ENCODE measurements at regions of chr22 and their contacts with region 1.

Region 1: GRCh38 chr22:42437488-42438292 is 5.5 kb upstream of the NFAM1 start:
- DNase-seq: peak; percentile 68 to 95 (median 86)
- ATAC-seq: peak; percentile 98
- H3K4me3 ChIP-seq: peak overlapping the region; percentile 40 to 52
- H3K4me3 Mint-ChIP-seq: peak overlapping the region; percentile 74
- H3K27ac ChIP-seq: no peak overlapping the region
- H3K27ac Mint-ChIP-seq: no peak overlapping the region
- H3K4me1 ChIP-seq: peaks cover 6% of the 10 kb centered on the region
- H3K4me1 Mint-ChIP-seq: peaks cover 7% of the 10 kb centered on the region
- H3K27me3 ChIP-seq: no peaks in the 10 kb centered on the region
- H3K27me3 Mint-ChIP-seq: no peaks in the 10 kb centered on the region
- CTCF ChIP-seq: peak; percentile 96

Region 2: GRCh38 chr22:41957941-41958556 is 479.6 kb before region 1 on chr22:
- CTCF ChIA-PET with region 1: no interaction called
- POLR2A ChIA-PET with region 1: no interaction called
- intact Hi-C with region 1: loop called (anchors 1 to 2 kb)
- DNase-seq: peak in 1 of 9 experiments; percentile 32
- ATAC-seq: peak; percentile 35
- H3K4me3 ChIP-seq: no peak overlapping the region
- H3K4me3 Mint-ChIP-seq: peak overlapping the region; percentile 11
- H3K27ac ChIP-seq: no peak overlapping the region
- H3K27ac Mint-ChIP-seq: no peak overlapping the region
- H3K4me1 ChIP-seq: no peaks in the 10 kb centered on the region
- H3K4me1 Mint-ChIP-seq: peaks cover 3% of the 10 kb centered on the region
- H3K27me3 ChIP-seq: peaks cover 0 to 6% of the 10 kb centered on the region in 2 experiments
- H3K27me3 Mint-ChIP-seq: no peaks in the 10 kb centered on the region
- CTCF ChIP-seq: peak; percentile 53

Region 3: DNA sequence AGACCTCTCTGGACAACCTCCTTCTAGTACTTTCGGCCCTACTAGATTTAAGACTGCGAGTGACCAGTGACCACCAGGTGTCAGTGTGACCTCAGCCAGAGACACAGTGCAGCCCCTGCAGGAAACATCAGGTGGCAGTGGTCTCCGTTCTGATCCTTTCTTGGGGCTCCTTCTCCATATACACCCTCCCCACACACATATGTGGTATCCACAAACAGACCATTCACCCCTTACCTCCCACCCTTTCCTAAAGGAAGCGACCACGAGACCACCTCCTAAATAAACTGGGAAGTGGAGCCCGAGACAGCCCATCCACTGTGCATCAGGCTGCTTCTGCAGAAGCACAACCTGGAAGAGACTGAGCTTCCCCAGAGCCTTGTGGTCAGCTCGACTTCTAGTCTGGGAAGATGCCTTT is 268.6 kb before region 1 on chr22:
- CTCF ChIA-PET with region 1: interaction called, 63 read pairs
- POLR2A ChIA-PET with region 1: no interaction called
- intact Hi-C with region 1: loop called in 1 of 2 experiments (anchors 1 kb)
- DNase-seq: peak; percentile 51 to 82 (median 74)
- ATAC-seq: peak; percentile 95
- H3K4me3 ChIP-seq: no peak overlapping the region
- H3K4me3 Mint-ChIP-seq: no peak overlapping the region
- H3K27ac ChIP-seq: no peak overlapping the region
- H3K27ac Mint-ChIP-seq: no peak overlapping the region
- H3K4me1 ChIP-seq: peaks cover 3% of the 10 kb centered on the region
- H3K4me1 Mint-ChIP-seq: peaks cover 36% of the 10 kb centered on the region
- H3K27me3 ChIP-seq: no peaks in the 10 kb centered on the region
- H3K27me3 Mint-ChIP-seq: no peaks in the 10 kb centered on the region
- CTCF ChIP-seq: peak; percentile 94

Region 4: DNA sequence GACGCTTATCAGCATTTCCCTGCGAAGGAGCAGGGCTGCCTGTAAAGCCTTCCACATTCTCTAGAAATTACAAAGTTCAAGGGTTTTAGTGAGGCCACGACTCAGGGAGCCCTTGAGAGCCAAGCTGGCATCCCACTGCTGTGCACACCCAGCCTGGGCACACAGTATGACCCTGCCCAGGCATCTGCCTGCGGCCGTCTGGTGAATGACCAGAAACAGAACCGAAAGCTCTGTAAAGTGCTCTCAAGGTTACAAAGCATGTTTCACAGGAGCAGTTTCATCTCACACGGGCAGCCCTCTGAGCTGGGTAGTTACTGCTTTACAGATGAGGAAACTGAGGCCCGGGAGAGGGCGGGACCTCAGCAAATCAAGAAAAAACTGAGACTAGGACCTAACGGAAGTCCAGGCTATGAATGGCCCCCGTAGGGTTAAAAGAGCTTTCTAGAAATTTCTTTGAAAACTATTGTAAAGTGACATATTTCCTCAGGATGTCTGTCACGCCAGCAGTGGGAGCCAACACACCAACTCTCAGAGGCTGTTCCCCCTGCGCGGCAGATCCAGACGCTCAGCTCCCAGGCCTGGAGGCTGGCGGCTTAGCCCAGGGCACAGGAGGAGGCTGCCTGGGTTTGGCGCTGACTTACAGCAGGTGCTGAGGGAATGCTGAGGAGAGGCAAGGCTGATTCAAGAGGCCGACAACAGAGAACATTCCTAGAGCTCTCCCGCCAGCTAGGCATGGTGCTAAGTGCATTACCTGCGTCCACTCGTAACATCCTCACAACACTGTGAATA is 159.5 kb before region 1 on chr22:
- CTCF ChIA-PET with region 1: interaction called, 10 read pairs
- POLR2A ChIA-PET with region 1: no interaction called
- intact Hi-C with region 1: no loop called
- DNase-seq: no peak
- ATAC-seq: no peak
- H3K4me3 ChIP-seq: no peak overlapping the region
- H3K4me3 Mint-ChIP-seq: no peak overlapping the region
- H3K27ac ChIP-seq: no peak overlapping the region
- H3K27ac Mint-ChIP-seq: no peak overlapping the region
- H3K4me1 ChIP-seq: no peaks in the 10 kb centered on the region
- H3K4me1 Mint-ChIP-seq: peaks cover 4% of the 10 kb centered on the region
- H3K27me3 ChIP-seq: peaks cover 4 to 9% of the 10 kb centered on the region in 2 experiments
- H3K27me3 Mint-ChIP-seq: peaks cover 3% of the 10 kb centered on the region
- CTCF ChIP-seq: no peak

Region 5: DNA sequence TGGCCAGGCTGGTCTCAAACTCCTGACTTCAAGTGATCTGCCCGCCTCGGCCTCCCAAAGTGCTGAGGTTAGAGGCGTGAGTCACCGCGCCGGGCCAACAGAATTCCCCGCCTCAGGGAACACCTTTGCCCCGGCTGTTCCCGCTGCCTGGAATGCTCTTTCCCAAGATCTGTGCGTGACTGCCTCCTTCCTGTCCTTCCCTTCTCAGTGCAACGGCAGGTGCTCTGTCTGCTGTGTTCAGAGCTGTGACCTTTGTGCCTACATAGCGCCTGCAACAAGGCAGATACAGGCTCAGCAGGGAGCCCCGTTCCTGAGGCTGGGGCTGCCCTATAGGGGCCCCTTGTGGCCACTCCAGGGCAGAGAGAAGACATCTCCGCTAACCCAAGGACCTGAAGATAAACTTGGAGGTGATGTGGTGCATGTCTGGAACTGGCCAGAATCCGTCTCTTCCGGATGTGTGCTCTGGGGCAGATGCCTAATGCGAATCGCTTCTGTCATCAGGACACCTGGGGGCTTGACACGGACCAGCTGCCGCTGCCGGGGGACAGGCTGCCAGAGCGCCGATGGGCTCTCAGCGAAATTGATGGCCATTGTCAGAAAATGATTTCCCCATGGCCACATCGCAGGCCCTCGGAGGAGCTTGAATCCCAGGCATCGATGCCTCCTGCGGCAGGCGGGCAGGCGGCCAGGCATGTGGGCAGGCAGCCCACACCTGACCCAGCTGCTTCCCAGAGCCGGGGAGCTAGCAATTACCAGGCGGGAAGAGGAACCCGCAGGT is 123.7 kb before region 1 on chr22:
- CTCF ChIA-PET with region 1: no interaction called
- POLR2A ChIA-PET with region 1: no interaction called
- intact Hi-C with region 1: loop called (anchors 1 kb)
- DNase-seq: peak in 6 of 9 experiments; percentile 33 to 71 (median 44)
- ATAC-seq: peak; percentile 50
- H3K4me3 ChIP-seq: no peak overlapping the region
- H3K4me3 Mint-ChIP-seq: no peak overlapping the region
- H3K27ac ChIP-seq: peak overlapping the region in 1 of 2 experiments; percentile 50
- H3K27ac Mint-ChIP-seq: no peak overlapping the region
- H3K4me1 ChIP-seq: peaks cover 85% of the 10 kb centered on the region
- H3K4me1 Mint-ChIP-seq: peaks cover 45% of the 10 kb centered on the region
- H3K27me3 ChIP-seq: no peaks in the 10 kb centered on the region
- H3K27me3 Mint-ChIP-seq: no peaks in the 10 kb centered on the region
- CTCF ChIP-seq: peak; percentile 32

Region 6: GRCh38 chr22:42414056-42414455 is 23.6 kb before region 1 on chr22:
- CTCF ChIA-PET with region 1: no interaction called
- POLR2A ChIA-PET with region 1: no interaction called
- intact Hi-C with region 1: no loop called
- DNase-seq: no peak
- ATAC-seq: no peak
- H3K4me3 ChIP-seq: no peak overlapping the region
- H3K4me3 Mint-ChIP-seq: no peak overlapping the region
- H3K27ac ChIP-seq: no peak overlapping the region
- H3K27ac Mint-ChIP-seq: no peak overlapping the region
- H3K4me1 ChIP-seq: no peaks in the 10 kb centered on the region
- H3K4me1 Mint-ChIP-seq: no peaks in the 10 kb centered on the region
- H3K27me3 ChIP-seq: no peaks in the 10 kb centered on the region
- H3K27me3 Mint-ChIP-seq: no peaks in the 10 kb centered on the region
- CTCF ChIP-seq: no peak

Region 7: DNA sequence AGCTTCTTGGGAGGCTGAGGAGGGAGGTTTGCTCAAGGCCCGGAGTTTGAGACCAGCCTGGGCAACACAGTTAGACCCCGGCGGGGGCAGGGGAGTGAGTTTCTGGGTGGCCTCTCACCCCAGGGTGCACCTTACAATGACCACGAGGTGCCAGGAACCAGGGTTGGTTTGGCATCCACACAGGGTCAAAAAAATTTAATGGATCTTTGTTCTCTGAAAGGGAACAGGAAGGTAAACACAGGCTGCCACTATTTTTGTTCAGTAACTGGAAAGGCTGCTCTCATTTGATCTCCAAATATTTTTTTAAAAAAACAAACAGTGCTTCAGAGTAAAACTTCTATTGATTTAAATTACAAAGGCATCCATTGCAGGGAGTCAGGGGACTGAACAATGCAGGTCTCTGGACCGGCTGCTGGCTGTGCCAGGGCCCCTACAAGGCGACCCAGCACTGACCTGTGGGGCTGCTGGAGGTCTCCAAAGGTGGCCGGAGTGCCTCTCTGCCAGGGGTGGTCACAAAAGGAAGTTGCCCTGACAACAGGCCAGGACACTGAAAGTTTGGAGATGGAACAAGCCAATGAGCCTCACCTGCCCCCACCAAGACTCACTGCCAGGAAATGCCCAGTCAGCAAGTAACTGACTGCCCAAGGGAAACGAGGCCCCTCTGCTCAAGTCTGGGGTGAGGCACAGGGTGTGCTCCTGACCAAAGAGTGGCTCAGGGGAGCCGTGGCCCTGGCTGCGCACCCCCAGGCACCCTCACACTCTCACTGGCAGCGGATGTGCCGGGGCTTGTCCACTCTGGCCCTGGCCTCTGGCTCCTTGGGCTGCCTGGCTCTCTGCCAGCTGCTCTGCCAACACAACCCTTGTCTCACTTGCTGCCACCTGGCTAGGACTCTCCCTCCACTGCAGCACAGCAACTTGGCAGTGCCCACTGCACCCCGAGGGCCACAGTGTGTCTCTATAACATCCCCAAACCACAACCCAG is 367.6 kb after region 1 on chr22:
- CTCF ChIA-PET with region 1: no interaction called
- POLR2A ChIA-PET with region 1: no interaction called
- intact Hi-C with region 1: no loop called
- DNase-seq: no peak
- ATAC-seq: no peak
- H3K4me3 ChIP-seq: no peak overlapping the region
- H3K4me3 Mint-ChIP-seq: no peak overlapping the region
- H3K27ac ChIP-seq: no peak overlapping the region
- H3K27ac Mint-ChIP-seq: no peak overlapping the region
- H3K4me1 ChIP-seq: no peaks in the 10 kb centered on the region
- H3K4me1 Mint-ChIP-seq: no peaks in the 10 kb centered on the region
- H3K27me3 ChIP-seq: no peaks in the 10 kb centered on the region
- H3K27me3 Mint-ChIP-seq: no peaks in the 10 kb centered on the region
- CTCF ChIP-seq: no peak